Activated naive CD4-positive, alpha-beta T cell treated with anti-CD3 and anti-CD28 coated beads for 36 hours (primary cell): ENCODE measurements at regions of chr9 and their contacts with region 1.

Region 1: GRCh38 chr9:33153666-33154065 is 13.5 kb downstream of the B4GALT1 start:
- DNase-seq: no peak
- H3K4me3 Mint-ChIP-seq: peak overlapping the region; percentile 8
- H3K27ac Mint-ChIP-seq: peak overlapping the region; percentile 76
- H3K4me1 Mint-ChIP-seq: peaks cover 80% of the 10 kb centered on the region
- H3K27me3 Mint-ChIP-seq: no peaks in the 10 kb centered on the region

Region 2: GRCh38 chr9:33143241-33143661 is 10.4 kb before region 1 on chr9:
- CTCF ChIA-PET with region 1: interaction called, 8 read pairs
- intact Hi-C with region 1: loop called (anchors 1 kb)
- DNase-seq: peak; percentile 30
- H3K4me3 Mint-ChIP-seq: no peak overlapping the region
- H3K27ac Mint-ChIP-seq: peak overlapping the region; percentile 34
- H3K4me1 Mint-ChIP-seq: peaks cover 89% of the 10 kb centered on the region
- H3K27me3 Mint-ChIP-seq: no peaks in the 10 kb centered on the region